K562 (cell line): ENCODE measurements at regions of chr4 and their contacts with region 1.

Region 1: GRCh38 chr4:54233277-54233696 is 4.2 kb downstream of the PDGFRA start:
- DNase-seq: peak; percentile 68 to 83 (median 74)
- ATAC-seq: peak; percentile 98
- H3K4me3 ChIP-seq: no peak overlapping the region
- H3K27ac ChIP-seq: no peak overlapping the region
- H3K4me1 ChIP-seq: peaks cover 0 to 12% of the 10 kb centered on the region in 2 experiments; a peak in 2 of 5 replicates
- H3K27me3 ChIP-seq: peaks cover 3 to 26% of the 10 kb centered on the region in 2 experiments; a peak in 3 of 5 replicates
- CTCF ChIP-seq: peak; percentile 72 to 78 (median 75)
- EP300 ChIP-seq: no peak
- POLR2A ChIP-seq: no peak
- RAD21 ChIP-seq: peak; percentile 62 to 70

Region 2: DNA sequence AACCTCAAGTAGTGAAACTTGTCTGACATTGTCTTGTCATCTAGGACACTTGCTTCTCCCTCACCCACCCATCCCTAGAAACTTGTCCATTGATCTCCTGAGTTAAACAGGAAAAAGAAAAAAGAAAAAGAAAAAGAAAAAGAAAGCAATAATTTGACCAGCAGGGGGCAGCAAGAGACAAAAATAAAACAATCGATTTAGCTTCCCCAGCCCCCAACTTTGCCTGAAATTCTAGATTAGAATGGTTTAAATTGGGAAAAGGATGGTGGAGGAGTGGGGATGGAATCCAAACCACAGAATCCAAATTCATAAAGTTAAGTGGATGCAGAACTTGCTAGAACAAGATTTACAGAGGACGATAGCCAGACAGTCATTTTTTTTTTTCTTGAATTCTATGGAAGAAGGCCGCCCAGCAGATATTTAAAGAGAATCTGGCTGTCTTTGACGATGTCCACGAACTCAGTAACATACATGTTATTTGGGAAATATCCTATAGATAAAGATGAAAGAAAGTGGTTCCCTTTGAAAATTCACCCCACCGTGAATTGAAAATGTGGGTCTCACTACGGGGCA is 1857.1 kb before region 1 on chr4:
- CTCF ChIA-PET with region 1: interaction called, 3 read pairs
- POLR2A ChIA-PET with region 1: no interaction called
- in situ Hi-C with region 1: loop called (anchors 25 kb)
- intact Hi-C with region 1: loop called (anchors 5 kb)
- DNase-seq: peak; percentile 23 to 57 (median 32)
- ATAC-seq: no peak
- H3K4me3 ChIP-seq: no peak overlapping the region
- H3K27ac ChIP-seq: no peak overlapping the region
- H3K4me1 ChIP-seq: no peaks in the 10 kb centered on the region
- H3K27me3 ChIP-seq: no peaks in the 10 kb centered on the region; a peak in 2 of 5 replicates
- CTCF ChIP-seq: peak; percentile 31 to 66 (median 57); a peak in 5 of 6 replicates
- EP300 ChIP-seq: no peak
- POLR2A ChIP-seq: no peak
- RAD21 ChIP-seq: peak; percentile 60 to 66

Region 3: GRCh38 chr4:53490965-53491622 is 742.2 kb before region 1 on chr4:
- CTCF ChIA-PET with region 1: interaction called, 3 read pairs
- POLR2A ChIA-PET with region 1: no interaction called
- in situ Hi-C with region 1: loop called (anchors 25 kb)
- intact Hi-C with region 1: loop called (anchors 10 kb)
- DNase-seq: peak; percentile 40 to 52 (median 44)
- ATAC-seq: peak; percentile 85
- H3K4me3 ChIP-seq: no peak overlapping the region
- H3K27ac ChIP-seq: no peak overlapping the region
- H3K4me1 ChIP-seq: peaks cover 0 to 4% of the 10 kb centered on the region in 2 experiments; a peak in 2 of 5 replicates
- H3K27me3 ChIP-seq: no peaks in the 10 kb centered on the region
- CTCF ChIP-seq: peak; percentile 46 to 60 (median 59); a peak in 4 of 6 replicates
- EP300 ChIP-seq: no peak
- POLR2A ChIP-seq: no peak
- RAD21 ChIP-seq: peak; percentile 37 to 52; a peak in 3 of 4 replicates

Region 4: GRCh38 chr4:53706422-53707032 is 526.8 kb before region 1 on chr4:
- CTCF ChIA-PET with region 1: no interaction called
- POLR2A ChIA-PET with region 1: no interaction called
- in situ Hi-C with region 1: loop called (anchors 5 kb)
- intact Hi-C with region 1: loop called (anchors 5 kb)
- DNase-seq: peak; percentile 13 to 38 (median 20)
- ATAC-seq: peak; percentile 75
- H3K4me3 ChIP-seq: no peak overlapping the region
- H3K27ac ChIP-seq: no peak overlapping the region
- H3K4me1 ChIP-seq: no peaks in the 10 kb centered on the region; a peak in 1 of 5 replicates
- H3K27me3 ChIP-seq: peaks cover 0 to 11% of the 10 kb centered on the region in 2 experiments; a peak in 2 of 5 replicates
- CTCF ChIP-seq: peak; percentile 46 to 62 (median 61); a peak in 5 of 6 replicates
- EP300 ChIP-seq: no peak
- POLR2A ChIP-seq: no peak
- RAD21 ChIP-seq: peak; percentile 30 to 53

Region 5: GRCh38 chr4:53908661-53909078 is 324.6 kb before region 1 on chr4:
- CTCF ChIA-PET with region 1: interaction called, 10 read pairs
- POLR2A ChIA-PET with region 1: no interaction called
- in situ Hi-C with region 1: loop called (anchors 5 kb)
- intact Hi-C with region 1: no loop called
- DNase-seq: peak; percentile 16 to 67 (median 38)
- ATAC-seq: peak; percentile 94
- H3K4me3 ChIP-seq: no peak overlapping the region
- H3K27ac ChIP-seq: no peak overlapping the region
- H3K4me1 ChIP-seq: peaks cover 0 to 5% of the 10 kb centered on the region in 2 experiments; a peak in 1 of 5 replicates
- H3K27me3 ChIP-seq: peaks cover 2 to 10% of the 10 kb centered on the region in 2 experiments; a peak in 4 of 5 replicates
- CTCF ChIP-seq: peak; percentile 71 to 86 (median 81)
- EP300 ChIP-seq: peak; percentile 37; the same call in 1 of the 2 replicates
- POLR2A ChIP-seq: no peak
- RAD21 ChIP-seq: peak; percentile 86